Right ventricle myocardium superior (tissue), 1 donor: ENCODE measurements at regions of chr11 and their contacts with region 1.

Region 1: DNA sequence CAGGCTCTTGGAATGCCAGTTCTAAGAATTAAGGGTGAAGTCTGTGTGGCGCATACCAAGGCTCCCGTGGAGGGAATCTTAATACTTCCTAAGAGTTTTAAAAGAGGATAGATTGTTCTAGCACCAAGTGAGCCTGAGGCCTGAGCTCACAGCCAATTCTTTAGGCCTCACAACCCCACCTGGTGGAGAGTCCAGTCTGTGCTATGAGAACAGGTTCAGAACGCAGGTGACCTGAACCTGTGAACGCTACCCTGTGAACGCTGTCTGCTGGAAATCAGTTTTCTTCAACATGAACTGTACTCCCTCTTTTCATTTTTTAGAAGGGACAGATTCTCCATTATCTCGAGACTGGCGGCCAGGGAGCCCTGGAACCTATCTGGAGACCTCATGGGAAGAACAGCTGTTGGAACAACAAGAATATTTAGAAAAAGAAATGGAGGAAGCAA is 43.2 kb upstream of the DLAT start:
- DNase-seq: peak; percentile 57
- ATAC-seq: peak; percentile 67

Region 2: GRCh38 chr11:111933872-111934271 is 48.2 kb before region 1 on chr11:
- intact Hi-C with region 1: loop called (anchors 5 kb)
- DNase-seq: no peak
- ATAC-seq: no peak